ENCODE measurements at regions of chrX and their contacts with region 1.

Region 1: DNA sequence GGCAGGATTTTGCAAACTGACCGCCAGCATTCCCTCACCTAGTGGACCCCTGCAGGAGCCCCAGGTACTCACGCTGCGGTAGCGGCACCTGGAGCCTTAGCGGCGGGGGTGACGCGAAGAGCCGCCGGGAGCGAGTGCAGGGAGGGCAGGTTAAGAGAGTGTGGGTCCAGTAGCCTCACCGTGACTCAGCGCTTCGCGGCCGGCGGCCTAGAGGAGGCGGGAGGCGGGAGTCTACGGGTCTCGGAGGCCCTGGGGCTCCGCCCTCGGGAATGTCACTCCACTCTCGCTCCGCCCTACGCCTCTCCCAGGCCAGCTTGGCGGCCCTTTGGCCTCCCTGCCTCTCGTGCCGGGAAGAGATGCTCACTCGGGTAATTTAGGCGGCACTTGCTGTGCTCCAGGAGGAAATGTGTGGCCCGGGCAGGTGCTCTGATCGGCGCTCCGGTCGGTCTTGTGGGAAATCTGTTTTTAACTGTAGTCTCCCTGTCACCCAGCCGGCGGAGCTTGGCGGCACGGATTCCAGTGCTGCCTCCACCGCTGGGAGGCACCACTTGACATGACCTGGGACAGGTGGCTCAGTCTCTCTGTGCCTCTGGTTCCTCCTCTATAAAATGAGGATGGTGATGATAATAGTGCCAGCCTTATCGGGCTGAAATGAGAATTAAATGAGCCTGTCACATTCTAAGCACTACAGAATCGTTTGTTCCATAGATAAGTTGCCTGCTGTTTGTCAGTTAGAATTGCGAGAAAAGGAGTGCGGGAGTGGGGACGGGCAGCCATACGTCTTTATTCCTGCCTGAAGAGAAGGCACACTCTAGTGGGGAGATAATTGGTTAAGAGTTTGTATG is at the start of gene PIR:
- DNase-seq: peak; percentile 91 to 96
- H3K4me3 ChIP-seq: peak within 1 kb of the TSS; percentile 52
- H3K4me1 ChIP-seq: peaks cover 20% of the 10 kb centered on the region
- H3K27me3 ChIP-seq: no peaks in the 10 kb centered on the region

Region 2: DNA sequence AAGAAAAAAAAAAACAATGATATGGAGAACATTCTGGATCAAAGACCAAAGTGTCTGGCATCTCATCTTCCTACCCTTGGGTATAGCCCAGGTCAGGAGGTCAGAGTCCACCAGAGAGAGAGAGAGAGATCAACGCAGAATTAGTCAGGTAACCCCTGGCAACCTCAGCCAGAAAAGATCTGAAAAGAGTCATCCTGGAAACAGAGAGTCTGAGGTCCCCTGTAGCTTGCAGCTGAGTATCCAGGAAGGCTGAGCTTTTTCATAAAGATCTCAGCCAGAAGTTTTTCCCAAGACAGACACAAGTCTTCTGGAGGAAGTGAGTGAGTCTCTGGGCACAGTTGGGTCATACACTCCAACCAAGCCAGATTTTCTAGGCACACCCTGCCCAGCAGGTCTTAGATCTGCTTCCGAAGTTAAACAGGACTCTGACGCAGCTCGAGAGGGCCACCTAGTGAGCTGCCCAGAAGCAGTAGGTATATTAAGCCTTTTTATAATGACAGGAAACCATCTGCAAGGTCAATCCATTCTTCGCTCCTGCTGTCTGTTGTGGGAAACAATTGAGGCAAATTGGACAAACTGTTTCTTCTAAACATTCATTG is 71.7 kb after region 1 on chrX:
- in situ Hi-C with region 1: loop called (anchors 5 kb)
- DNase-seq: peak; percentile 67 to 74
- H3K4me3 ChIP-seq: no peak overlapping the region
- H3K4me1 ChIP-seq: no peaks in the 10 kb centered on the region
- H3K27me3 ChIP-seq: peaks cover 5% of the 10 kb centered on the region

Region 3: GRCh38 chrX:15674841-15675489 is 181.6 kb after region 1 on chrX:
- in situ Hi-C with region 1: loop called (anchors 25 kb)
- DNase-seq: peak; percentile 94
- H3K4me3 ChIP-seq: peak overlapping the region; percentile 98
- H3K4me1 ChIP-seq: peaks cover 13% of the 10 kb centered on the region
- H3K27me3 ChIP-seq: no peaks in the 10 kb centered on the region

Region 4: DNA sequence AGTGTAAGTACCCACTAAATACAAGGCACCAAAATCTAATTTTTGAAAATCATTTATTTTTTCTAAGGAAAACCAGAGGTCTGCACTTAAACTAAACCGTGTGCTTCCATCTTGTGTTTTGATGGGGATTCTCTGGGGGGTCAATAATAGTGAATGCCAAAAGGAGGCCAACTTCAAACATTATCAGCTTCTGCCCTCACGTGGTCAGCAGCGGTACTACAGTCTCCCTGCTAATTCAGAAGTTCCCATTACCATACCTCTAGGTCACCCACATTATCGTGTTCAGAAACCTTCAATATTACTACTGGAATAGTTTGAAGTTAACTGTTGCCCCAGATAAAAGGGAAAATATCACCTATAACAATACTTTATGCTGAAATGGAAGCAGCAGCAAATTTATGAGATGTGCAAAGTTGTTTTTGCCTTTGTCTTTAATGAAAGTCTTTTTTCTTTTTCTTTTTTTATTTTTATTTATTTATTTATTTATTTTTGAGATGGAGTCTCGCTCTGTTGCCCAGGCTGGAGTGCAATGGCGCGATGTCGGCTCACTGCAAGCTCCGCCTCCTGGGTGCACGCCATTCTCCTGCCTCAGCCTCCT is 1201.8 kb after region 1 on chrX:
- in situ Hi-C with region 1: loop called (anchors 25 kb)
- DNase-seq: peak; percentile 56 to 84
- H3K4me3 ChIP-seq: no peak overlapping the region
- H3K4me1 ChIP-seq: no peaks in the 10 kb centered on the region
- H3K27me3 ChIP-seq: no peaks in the 10 kb centered on the region